Activated naive CD4-positive, alpha-beta T cell treated with anti-CD3 and anti-CD28 coated beads for 36 hours (primary cell): ENCODE measurements at regions of chr4 and their contacts with region 1.

Region 1: GRCh38 chr4:27000820-27001219 is 140.2 kb downstream of the STIM2 start:
- DNase-seq: peak; percentile 30
- H3K4me3 Mint-ChIP-seq: no peak overlapping the region
- H3K27ac Mint-ChIP-seq: no peak overlapping the region
- H3K4me1 Mint-ChIP-seq: peaks cover 63% of the 10 kb centered on the region
- H3K27me3 Mint-ChIP-seq: no peaks in the 10 kb centered on the region

Region 2: DNA sequence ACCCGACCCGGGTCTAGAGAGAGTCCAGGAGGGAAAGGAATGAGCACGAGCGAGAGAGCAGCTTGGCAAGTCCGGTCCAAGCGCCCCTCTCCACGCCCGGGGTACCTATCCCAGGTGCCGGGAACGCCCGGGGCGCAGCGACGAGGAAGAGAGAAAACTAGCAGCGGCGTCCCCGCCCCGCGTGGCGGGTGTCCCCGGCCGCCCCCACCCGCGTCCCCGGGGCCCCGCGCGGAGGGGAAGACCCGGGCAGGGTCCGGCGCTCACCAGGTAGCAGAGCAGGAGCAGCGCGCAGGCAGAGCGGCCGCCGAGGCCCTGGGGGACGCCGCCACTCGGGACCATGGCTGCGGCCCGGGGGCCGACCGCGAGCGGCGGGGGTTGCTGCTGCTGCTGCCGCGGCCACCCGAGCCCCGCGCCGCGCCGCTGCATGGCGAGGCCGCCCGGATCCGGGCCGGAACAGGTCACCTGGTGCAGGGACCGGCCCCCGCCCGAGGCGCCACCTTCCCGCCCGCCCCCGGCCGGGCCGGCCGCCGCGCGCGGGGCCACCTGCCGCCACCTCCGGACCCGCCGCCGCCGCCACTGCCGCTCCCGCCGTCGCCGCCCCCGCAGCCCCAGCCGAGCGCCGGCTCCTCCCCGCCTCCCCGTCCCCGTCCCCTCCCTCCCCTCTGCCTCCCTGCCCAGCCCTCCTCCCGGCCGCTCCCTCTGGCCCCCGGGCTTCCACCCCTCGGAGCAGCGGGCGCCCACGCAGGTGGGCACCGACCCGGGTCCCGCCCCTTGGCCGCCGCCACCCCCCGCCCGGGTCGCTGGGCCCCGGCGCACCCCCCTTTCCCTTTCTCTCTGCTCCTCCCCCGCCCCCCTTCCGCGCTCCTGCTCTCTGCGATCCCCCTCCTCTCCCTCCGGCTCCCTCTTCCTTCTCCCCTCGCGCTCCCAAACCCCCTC is 1138.1 kb before region 1 on chr4 and contains the start of gene SEL1L3:
- CTCF ChIA-PET with region 1: no interaction called
- intact Hi-C with region 1: loop called (anchors 5 kb)
- DNase-seq: peak; percentile 53
- H3K4me3 Mint-ChIP-seq: peak within 1 kb of the TSS; percentile 93
- H3K27ac Mint-ChIP-seq: peak within 1 kb of the TSS; percentile 92
- H3K4me1 Mint-ChIP-seq: peaks cover 33% of the 10 kb centered on the region
- H3K27me3 Mint-ChIP-seq: no peaks in the 10 kb centered on the region
- total RNA-seq, gene SEL1L3: 32.3 to 38.2 TPM

Region 3: GRCh38 chr4:26583865-26584652 is 416.8 kb before region 1 on chr4 and contains the start of gene TBC1D19:
- CTCF ChIA-PET with region 1: no interaction called
- intact Hi-C with region 1: loop called (anchors 5 kb)
- DNase-seq: peak; percentile 92
- H3K4me3 Mint-ChIP-seq: peak within 1 kb of the TSS; percentile 93
- H3K27ac Mint-ChIP-seq: peak within 1 kb of the TSS; percentile 92
- H3K4me1 Mint-ChIP-seq: peaks cover 32% of the 10 kb centered on the region
- H3K27me3 Mint-ChIP-seq: no peaks in the 10 kb centered on the region
- total RNA-seq, gene TBC1D19: 3.8 to 4.1 TPM

Region 4: GRCh38 chr4:26787461-26788340 is 213.1 kb before region 1 on chr4:
- CTCF ChIA-PET with region 1: no interaction called
- intact Hi-C with region 1: loop called (anchors 5 kb)
- DNase-seq: peak; percentile 77
- H3K4me3 Mint-ChIP-seq: no peak overlapping the region
- H3K27ac Mint-ChIP-seq: no peak overlapping the region
- H3K4me1 Mint-ChIP-seq: peaks cover 13% of the 10 kb centered on the region
- H3K27me3 Mint-ChIP-seq: peaks cover 2% of the 10 kb centered on the region

Region 5: GRCh38 chr4:26885912-26886274 is 114.9 kb before region 1 on chr4:
- CTCF ChIA-PET with region 1: interaction called, 4 read pairs
- intact Hi-C with region 1: loop called (anchors 1 kb)
- DNase-seq: peak; percentile 42
- H3K4me3 Mint-ChIP-seq: peak overlapping the region; percentile 58
- H3K27ac Mint-ChIP-seq: peak overlapping the region; percentile 88
- H3K4me1 Mint-ChIP-seq: peaks cover 67% of the 10 kb centered on the region
- H3K27me3 Mint-ChIP-seq: no peaks in the 10 kb centered on the region

Region 6: GRCh38 chr4:26985873-26986272 is 14.9 kb before region 1 on chr4:
- CTCF ChIA-PET with region 1: interaction called, 19 read pairs
- intact Hi-C with region 1: no loop called
- DNase-seq: peak; percentile 56
- H3K4me3 Mint-ChIP-seq: no peak overlapping the region
- H3K27ac Mint-ChIP-seq: no peak overlapping the region
- H3K4me1 Mint-ChIP-seq: peaks cover 52% of the 10 kb centered on the region
- H3K27me3 Mint-ChIP-seq: no peaks in the 10 kb centered on the region

Region 7: DNA sequence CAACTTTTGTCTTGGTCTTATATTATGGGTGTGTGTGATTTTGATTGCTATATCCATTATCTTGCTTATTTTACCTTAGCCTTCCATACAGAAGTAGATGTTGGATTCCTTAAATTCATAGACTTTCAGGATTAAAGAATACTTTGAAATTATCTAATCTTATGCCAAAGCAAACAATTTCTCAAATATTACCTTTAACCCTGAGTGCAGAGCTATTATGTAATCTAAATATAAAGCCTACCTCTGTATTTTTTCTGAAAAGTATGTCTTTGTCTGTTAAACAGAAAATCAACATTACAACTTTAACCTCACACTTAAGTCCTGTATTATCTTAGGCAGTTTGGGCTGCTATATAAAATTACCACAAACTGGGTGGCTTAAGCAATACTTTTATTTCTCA is 642.3 kb after region 1 on chr4:
- CTCF ChIA-PET with region 1: no interaction called
- intact Hi-C with region 1: no loop called
- DNase-seq: no peak
- H3K4me3 Mint-ChIP-seq: no peak overlapping the region
- H3K27ac Mint-ChIP-seq: no peak overlapping the region
- H3K4me1 Mint-ChIP-seq: no peaks in the 10 kb centered on the region
- H3K27me3 Mint-ChIP-seq: no peaks in the 10 kb centered on the region